H1 (cell line): ENCODE measurements at regions of chr15 and their contacts with region 1.

Region 1: DNA sequence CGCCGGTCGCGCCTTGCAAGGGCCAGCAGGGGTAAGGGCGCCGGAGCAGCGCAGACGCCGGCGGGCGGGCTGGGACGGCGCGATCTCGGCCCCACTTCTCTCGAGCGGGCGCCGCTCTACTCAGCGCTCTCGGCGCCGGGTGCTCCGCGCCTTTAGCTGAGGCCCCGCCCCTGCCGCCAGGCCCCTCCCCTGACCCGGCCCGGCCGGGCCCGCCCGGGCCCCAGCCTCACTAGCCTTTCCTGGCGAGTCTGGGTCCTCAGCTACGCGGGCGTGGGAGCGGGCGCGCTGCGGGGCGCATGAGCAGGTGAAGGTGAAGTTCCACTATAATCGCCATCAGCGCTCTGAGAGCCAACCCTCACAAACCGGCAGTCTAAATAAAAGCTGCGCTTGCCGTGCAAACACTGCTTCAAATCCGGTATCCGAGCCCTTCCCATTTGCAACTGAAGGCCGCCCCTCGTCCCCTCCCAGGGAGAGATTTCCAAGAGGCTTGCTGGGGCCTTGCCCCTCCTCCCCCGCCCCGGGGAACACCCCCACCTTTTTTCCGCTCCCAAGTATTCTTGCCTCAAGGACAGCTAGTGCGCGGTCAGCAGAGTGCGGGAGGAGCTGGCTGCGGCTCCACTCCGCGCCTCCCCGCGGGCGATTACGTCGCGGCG is at the start of gene RPP25:
- DNase-seq: peak in 1 of 2 experiments; percentile 90
- H3K4me3 ChIP-seq: peak within 1 kb of the TSS; percentile 41 to 77 (median 69)
- H3K27ac ChIP-seq: peak within 1 kb of the TSS; percentile 33; the same call in 1 of the 2 replicates
- H3K4me1 ChIP-seq: peaks cover 0 to 22% (median 13%) of the 10 kb centered on the region in 4 experiments; a peak in 6 of 7 replicates
- H3K27me3 ChIP-seq: peaks cover 5 to 36% (median 33%) of the 10 kb centered on the region in 4 experiments
- CTCF ChIP-seq: no peak
- EP300 ChIP-seq: no peak
- POLR2A ChIP-seq: peak in 1 of 2 experiments; percentile 87; a peak in 2 of 3 replicates
- RAD21 ChIP-seq: no peak
- total RNA-seq, gene RPP25: 19.4 and 19.8 TPM in 2 replicates

Region 2: DNA sequence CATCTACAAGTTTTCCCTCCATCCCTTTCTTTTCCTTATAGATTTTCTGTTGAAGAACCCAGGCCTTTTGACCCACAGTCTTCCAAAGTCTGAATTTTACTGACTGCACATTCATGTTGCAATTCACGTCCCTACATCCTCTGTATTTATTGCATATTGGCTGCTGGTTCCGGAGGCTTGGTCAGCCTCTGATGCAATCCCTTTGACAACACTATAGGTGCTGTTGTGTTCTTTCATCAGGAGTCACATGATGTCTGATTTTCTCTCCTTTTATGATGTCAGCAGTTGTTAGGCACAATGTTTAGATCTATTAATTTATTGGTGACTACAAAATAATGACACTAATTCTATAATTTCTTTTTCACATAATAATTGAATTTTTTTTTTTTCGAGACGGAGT is 240.1 kb before region 1 on chr15:
- CTCF ChIA-PET with region 1: no interaction called
- POLR2A ChIA-PET with region 1: no interaction called
- DNase-seq: no peak
- H3K4me3 ChIP-seq: no peak overlapping the region
- H3K27ac ChIP-seq: no peak overlapping the region
- H3K4me1 ChIP-seq: no peaks in the 10 kb centered on the region
- H3K27me3 ChIP-seq: peaks cover 0 to 3% (median 0%) of the 10 kb centered on the region in 4 experiments; a peak in 3 of 7 replicates
- CTCF ChIP-seq: no peak
- EP300 ChIP-seq: no peak
- POLR2A ChIP-seq: no peak
- RAD21 ChIP-seq: no peak

Region 3: DNA sequence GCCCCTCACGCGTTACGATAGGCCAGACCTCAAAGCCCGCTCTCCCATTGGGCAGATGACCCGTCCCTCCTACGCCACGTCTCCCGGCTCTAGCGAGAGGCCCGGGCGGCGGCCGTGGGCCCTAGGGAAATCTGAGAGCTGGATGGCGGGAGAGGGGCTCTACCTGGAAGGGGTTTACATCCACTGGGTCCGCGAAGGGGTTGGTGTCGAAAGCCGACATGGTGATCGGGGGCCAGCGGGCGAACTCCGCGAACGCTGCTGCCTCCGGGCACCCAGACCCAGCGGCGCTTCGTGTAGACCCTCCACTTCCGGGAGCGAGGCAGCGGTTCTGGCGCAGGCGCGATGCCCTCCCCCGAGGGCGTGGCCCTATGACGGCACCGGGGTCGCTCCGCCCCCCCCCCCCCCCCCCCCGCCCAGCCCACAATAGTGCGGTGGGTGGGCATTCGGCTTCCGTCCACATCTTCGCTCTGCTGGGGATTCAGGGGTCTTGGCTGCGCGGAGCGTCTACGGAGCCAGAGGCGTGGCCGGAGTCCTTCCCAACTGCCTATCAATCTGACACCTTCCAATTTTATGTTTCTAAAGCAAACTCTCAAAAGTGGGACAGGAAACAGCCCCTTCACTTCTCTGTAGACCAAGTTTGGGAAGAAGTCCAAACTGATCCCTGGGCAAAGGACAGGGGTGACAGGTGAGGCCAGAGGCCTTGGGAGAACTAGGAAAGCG is 83.6 kb before region 1 on chr15 and contains the start of gene SCAMP2:
- CTCF ChIA-PET with region 1: no interaction called
- POLR2A ChIA-PET with region 1: no interaction called
- DNase-seq: peak; percentile 84 to 96
- H3K4me3 ChIP-seq: peak within 1 kb of the TSS; percentile 80 to 98 (median 93)
- H3K27ac ChIP-seq: peak within 1 kb of the TSS; percentile 92; the same call in 1 of the 2 replicates
- H3K4me1 ChIP-seq: peaks cover 0 to 3% (median 0%) of the 10 kb centered on the region in 4 experiments; a peak in 1 of 7 replicates
- H3K27me3 ChIP-seq: no peaks in the 10 kb centered on the region
- CTCF ChIP-seq: no peak
- EP300 ChIP-seq: no peak
- POLR2A ChIP-seq: peak; percentile 81 to 92
- RAD21 ChIP-seq: no peak
- total RNA-seq, gene SCAMP2: 40.3 and 41.7 TPM in 2 replicates

Region 4: DNA sequence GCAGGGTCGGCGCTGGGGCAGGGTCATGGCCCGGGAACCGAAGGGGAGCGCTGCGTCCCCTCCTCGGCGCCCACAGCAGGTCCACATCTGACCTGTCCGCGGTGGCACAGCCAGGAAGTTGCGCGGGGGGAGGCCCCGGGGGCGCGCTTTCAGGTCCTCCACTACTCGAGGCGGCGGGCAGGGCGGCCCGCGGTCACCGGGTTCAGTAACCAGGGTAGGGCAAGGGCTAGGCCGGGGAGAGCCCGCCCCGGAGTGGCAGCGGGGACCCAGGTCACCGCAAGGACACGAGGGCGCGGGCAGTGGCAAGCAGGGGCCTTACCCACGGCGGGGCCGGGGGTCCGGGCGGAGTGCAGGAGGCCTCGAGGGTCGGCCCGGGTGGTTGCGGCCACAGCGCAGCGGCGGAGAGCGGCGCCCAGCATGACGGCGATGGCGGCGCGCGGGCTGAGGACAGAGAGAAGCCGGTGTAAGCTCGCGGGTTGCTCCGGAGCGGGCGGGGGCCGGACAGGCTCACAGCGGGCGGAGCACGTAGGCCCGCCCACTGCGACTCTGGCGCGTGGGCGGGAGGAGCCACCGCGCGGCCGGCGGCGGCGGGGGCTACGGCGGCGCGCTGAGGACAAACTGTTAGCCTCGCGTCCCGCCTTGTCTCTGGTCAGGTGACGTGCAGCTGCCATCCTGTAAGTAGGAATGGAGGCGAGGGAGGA is 19.0 kb before region 1 on chr15 and contains the start of gene COX5A:
- CTCF ChIA-PET with region 1: interaction called, 37 read pairs
- POLR2A ChIA-PET with region 1: interaction called, 29 read pairs
- DNase-seq: peak; percentile 87 to 90
- H3K4me3 ChIP-seq: peak within 1 kb of the TSS; percentile 84 to 91 (median 86)
- H3K27ac ChIP-seq: peak within 1 kb of the TSS; percentile 93; the same call in 1 of the 2 replicates
- H3K4me1 ChIP-seq: no peaks in the 10 kb centered on the region
- H3K27me3 ChIP-seq: no peaks in the 10 kb centered on the region
- CTCF ChIP-seq: no peak
- EP300 ChIP-seq: 0 out of 3 replicates have a peak, but pooled peaks of 1 of the 2 experiments have one; percentile 30
- POLR2A ChIP-seq: peak; percentile 72 to 73
- RAD21 ChIP-seq: no peak
- total RNA-seq, gene COX5A: 367 and 373 TPM in 2 replicates

Region 5: DNA sequence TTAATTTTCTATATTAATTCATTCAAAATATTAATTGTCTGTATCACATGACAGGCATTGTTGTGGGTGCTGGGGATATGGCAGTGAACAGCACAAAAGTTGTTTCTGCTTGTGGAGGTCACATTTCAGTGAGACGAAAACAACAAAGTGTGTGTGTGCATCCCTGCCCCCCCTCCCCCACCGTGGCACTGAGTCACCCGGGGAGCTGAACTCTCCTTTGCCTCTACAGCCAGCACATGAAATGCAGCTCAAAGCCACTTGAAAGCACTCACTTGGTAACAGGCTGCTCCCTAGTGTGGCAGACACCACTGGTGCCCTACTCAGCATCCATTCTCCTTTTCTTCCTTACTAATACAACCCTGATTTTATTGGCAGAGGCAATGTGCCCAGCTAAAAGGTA is 21.7 kb after region 1 on chr15:
- CTCF ChIA-PET with region 1: interaction called, 20 read pairs
- POLR2A ChIA-PET with region 1: interaction called, 3 read pairs
- DNase-seq: no peak
- H3K4me3 ChIP-seq: no peak overlapping the region
- H3K27ac ChIP-seq: no peak overlapping the region
- H3K4me1 ChIP-seq: peaks cover 0 to 4% (median 1%) of the 10 kb centered on the region in 4 experiments; a peak in 3 of 7 replicates
- H3K27me3 ChIP-seq: no peaks in the 10 kb centered on the region
- CTCF ChIP-seq: no peak
- EP300 ChIP-seq: no peak
- POLR2A ChIP-seq: no peak
- RAD21 ChIP-seq: no peak

Region 6: GRCh38 chr15:74995241-74995778 is 38.5 kb after region 1 on chr15 and contains the start of gene SCAMP5:
- CTCF ChIA-PET with region 1: interaction called, 6 read pairs
- POLR2A ChIA-PET with region 1: interaction called, 10 read pairs
- DNase-seq: peak; percentile 84 to 99
- H3K4me3 ChIP-seq: peak within 1 kb of the TSS; percentile 87 to 97 (median 90)
- H3K27ac ChIP-seq: no peak within 1 kb of the TSS
- H3K4me1 ChIP-seq: peaks cover 0 to 7% (median 4%) of the 10 kb centered on the region in 4 experiments; a peak in 6 of 7 replicates
- H3K27me3 ChIP-seq: peaks cover 0 to 3% (median 0%) of the 10 kb centered on the region in 4 experiments; a peak in 3 of 7 replicates
- CTCF ChIP-seq: no peak
- EP300 ChIP-seq: no peak
- POLR2A ChIP-seq: no peak
- RAD21 ChIP-seq: no peak
- total RNA-seq, gene SCAMP5: 51.8 and 55.4 TPM in 2 replicates